ENCODE measurements at regions of chr6 and their contacts with region 1.

Region 1: GRCh38 chr6:2853761-2854395 is 12.2 kb upstream of the SERPINB1 start:
- DNase-seq: peak; percentile 95
- H3K4me3 Mint-ChIP-seq: peak overlapping the region; percentile 63
- H3K27ac Mint-ChIP-seq: peak overlapping the region; percentile 100
- H3K4me1 Mint-ChIP-seq: peaks cover 65% of the 10 kb centered on the region
- H3K27me3 Mint-ChIP-seq: no peaks in the 10 kb centered on the region

Region 2: GRCh38 chr6:2870056-2870674 is 16.3 kb after region 1 on chr6:
- CTCF ChIA-PET with region 1: interaction called, 17 read pairs
- POLR2A ChIA-PET with region 1: interaction called, 9 read pairs
- intact Hi-C with region 1: no loop called
- DNase-seq: no peak
- H3K4me3 Mint-ChIP-seq: no peak overlapping the region
- H3K27ac Mint-ChIP-seq: no peak overlapping the region
- H3K4me1 Mint-ChIP-seq: peaks cover 70% of the 10 kb centered on the region
- H3K27me3 Mint-ChIP-seq: no peaks in the 10 kb centered on the region

Region 3: DNA sequence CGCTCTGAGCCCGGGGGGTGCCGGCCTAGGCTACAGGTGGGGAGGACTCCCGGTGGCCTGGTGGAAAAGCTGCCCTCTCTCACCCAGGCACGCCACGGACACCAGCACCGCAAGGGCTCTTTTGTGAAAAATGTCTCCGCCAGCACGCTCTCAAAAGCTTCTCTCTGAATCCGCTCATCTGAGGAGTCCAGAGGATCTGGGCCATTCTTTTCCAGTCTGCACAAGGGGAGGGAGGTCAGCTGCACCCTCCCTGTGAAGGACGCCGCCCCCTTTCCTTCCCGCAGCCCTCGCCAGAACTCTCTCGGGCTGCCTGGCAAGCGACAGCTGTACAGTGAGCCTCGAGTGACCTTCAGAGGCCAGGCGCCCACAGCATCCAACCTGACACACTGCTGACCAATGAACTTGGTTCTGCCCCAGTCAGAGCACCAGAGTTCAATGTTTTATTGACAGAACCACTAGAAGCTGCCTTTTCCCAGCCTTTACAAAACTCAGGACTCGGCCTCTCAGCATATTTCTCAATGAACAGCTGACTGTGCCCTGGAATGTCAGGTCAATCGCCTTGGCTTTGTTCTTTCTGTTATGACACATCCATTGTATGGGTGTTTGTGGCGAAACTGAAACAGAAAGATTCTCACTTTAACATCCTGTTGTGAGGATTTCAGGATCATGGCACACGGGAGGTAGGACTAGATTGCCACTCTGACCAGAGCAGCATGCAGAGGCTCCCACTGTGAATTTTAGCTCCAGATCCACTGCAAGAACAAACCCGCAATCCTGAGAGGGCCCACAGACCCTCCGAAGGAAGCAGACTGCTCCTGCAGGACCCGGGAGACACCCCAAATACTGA is 22.6 kb after region 1 on chr6:
- CTCF ChIA-PET with region 1: interaction called, 3 read pairs
- POLR2A ChIA-PET with region 1: interaction called, 4 read pairs
- intact Hi-C with region 1: loop called (anchors 1 kb)
- DNase-seq: peak; percentile 44
- H3K4me3 Mint-ChIP-seq: peak overlapping the region; percentile 80
- H3K27ac Mint-ChIP-seq: peak overlapping the region; percentile 90
- H3K4me1 Mint-ChIP-seq: peaks cover 81% of the 10 kb centered on the region
- H3K27me3 Mint-ChIP-seq: no peaks in the 10 kb centered on the region

Region 4: DNA sequence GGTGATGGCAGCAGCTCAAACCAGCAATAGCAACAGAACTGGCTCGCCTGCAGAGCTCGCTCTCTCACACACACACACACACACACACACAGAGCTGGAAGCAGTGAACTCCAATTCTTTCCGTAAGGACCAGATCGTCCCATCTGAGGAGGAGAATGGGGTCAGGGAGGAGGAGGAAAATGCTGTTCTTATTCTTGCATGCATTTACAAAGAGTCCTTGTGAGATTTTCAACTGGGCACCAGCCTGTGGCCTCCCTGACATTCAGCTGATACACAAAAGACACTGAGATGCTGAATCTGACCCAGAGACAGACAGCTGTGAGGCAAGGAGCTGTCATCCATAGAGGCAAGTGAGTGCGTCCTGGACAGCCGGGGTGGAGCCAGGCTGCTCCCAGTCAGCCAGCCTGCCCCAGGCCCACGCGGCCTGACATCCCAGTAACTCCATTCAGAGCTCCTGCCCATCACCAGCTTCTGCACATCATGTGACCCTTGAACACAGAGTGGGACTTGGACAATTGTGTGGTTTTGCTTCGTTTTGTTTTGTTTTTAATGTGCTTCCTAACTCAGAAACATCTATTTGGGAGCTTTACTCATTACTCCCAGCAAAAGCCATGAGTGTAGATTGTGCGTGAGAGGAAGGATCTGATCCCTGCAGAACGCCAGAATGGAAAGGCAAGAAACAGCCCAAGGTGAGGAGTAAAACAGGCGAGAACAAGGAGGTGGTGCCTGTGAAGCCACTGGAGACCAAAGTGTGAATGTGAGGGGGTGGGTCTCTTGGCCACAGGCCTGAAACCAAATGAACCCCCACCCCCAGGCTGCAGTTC is 47.2 kb after region 1 on chr6:
- CTCF ChIA-PET with region 1: interaction called, 53 read pairs
- POLR2A ChIA-PET with region 1: interaction called, 28 read pairs
- intact Hi-C with region 1: loop called (anchors 1 kb)
- DNase-seq: no peak
- H3K4me3 Mint-ChIP-seq: peak overlapping the region; percentile 99
- H3K27ac Mint-ChIP-seq: peak overlapping the region; percentile 95
- H3K4me1 Mint-ChIP-seq: peaks cover 41% of the 10 kb centered on the region
- H3K27me3 Mint-ChIP-seq: no peaks in the 10 kb centered on the region

Region 5: DNA sequence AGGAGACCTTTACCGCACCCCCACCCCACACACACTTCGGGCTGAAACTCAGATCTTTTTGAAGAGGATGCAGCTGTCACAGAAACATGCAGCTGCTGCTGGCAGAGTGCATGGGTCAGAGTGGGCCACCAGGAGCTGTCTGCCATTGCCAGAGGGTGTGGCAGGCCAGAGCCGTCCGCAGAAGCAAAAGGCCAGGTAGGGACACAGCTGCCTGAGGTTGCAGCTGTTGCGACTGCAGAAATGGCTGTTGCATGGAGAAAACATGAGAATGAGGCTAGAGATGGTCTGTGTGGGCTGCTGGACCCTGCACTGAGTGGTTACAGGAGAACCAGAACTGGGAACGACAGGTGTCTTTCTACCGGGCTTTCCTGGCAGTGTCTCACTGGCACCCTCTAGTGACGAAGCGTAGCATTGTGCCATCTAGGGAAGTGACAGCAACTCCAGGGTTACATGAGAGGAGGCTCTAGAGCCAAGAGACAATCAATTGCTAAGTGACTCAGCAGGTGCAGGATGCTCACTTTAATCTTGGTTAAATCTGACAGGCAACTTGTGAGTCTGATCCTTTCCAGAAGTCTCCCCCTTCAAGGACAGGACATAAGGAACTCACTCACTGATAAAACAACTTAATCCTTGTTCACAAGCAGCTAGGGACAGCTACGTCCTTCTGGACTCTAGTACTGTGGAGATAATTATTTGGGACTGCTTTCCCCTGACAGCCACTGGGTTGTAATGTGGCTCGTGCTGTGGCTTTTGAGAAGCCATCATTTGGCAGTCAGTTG is 78.3 kb after region 1 on chr6:
- CTCF ChIA-PET with region 1: interaction called, 109 read pairs
- POLR2A ChIA-PET with region 1: interaction called, 17 read pairs
- intact Hi-C with region 1: no loop called
- DNase-seq: peak; percentile 93
- H3K4me3 Mint-ChIP-seq: peak overlapping the region; percentile 28
- H3K27ac Mint-ChIP-seq: peak overlapping the region; percentile 77
- H3K4me1 Mint-ChIP-seq: peaks cover 26% of the 10 kb centered on the region
- H3K27me3 Mint-ChIP-seq: no peaks in the 10 kb centered on the region

Region 6: GRCh38 chr6:2940010-2940850 is 86.4 kb after region 1 on chr6:
- CTCF ChIA-PET with region 1: interaction called, 6 read pairs
- POLR2A ChIA-PET with region 1: interaction called, 18 read pairs
- intact Hi-C with region 1: loop called (anchors 1 kb)
- DNase-seq: peak; percentile 92
- H3K4me3 Mint-ChIP-seq: peak overlapping the region; percentile 54
- H3K27ac Mint-ChIP-seq: peak overlapping the region; percentile 99
- H3K4me1 Mint-ChIP-seq: peaks cover 67% of the 10 kb centered on the region
- H3K27me3 Mint-ChIP-seq: peaks cover 1% of the 10 kb centered on the region

Region 7: GRCh38 chr6:3068329-3069214 is 214.7 kb after region 1 on chr6 and contains the start of gene RIPK1:
- CTCF ChIA-PET with region 1: no interaction called
- POLR2A ChIA-PET with region 1: no interaction called
- intact Hi-C with region 1: loop called (anchors 2 kb)
- DNase-seq: peak; percentile 96
- H3K4me3 Mint-ChIP-seq: peak within 1 kb of the TSS; percentile 96
- H3K27ac Mint-ChIP-seq: peak within 1 kb of the TSS; percentile 98
- H3K4me1 Mint-ChIP-seq: peaks cover 62% of the 10 kb centered on the region
- H3K27me3 Mint-ChIP-seq: no peaks in the 10 kb centered on the region
- total RNA-seq, gene RIPK1: 18.5 to 18.6 TPM